ENCODE measurements at regions of chr3 and their contacts with region 1.

Region 1: GRCh38 chr3:46629551-46630517 is 17.5 kb downstream of the FAM240A start:
- DNase-seq: no peak
- H3K4me3 ChIP-seq: peak overlapping the region in 3 of 4 donors; percentile 20 to 55 (median 33)
- H3K27ac ChIP-seq: peak overlapping the region; percentile 41 to 81 (median 76)
- H3K4me1 ChIP-seq: peaks cover 4 to 25% (median 11%) of the 10 kb centered on the region in 3 donors
- H3K27me3 ChIP-seq: no peaks in the 10 kb centered on the region
- CTCF ChIP-seq: peak; percentile 84 to 96 (median 93)
- POLR2A ChIP-seq: no peak

Region 2: DNA sequence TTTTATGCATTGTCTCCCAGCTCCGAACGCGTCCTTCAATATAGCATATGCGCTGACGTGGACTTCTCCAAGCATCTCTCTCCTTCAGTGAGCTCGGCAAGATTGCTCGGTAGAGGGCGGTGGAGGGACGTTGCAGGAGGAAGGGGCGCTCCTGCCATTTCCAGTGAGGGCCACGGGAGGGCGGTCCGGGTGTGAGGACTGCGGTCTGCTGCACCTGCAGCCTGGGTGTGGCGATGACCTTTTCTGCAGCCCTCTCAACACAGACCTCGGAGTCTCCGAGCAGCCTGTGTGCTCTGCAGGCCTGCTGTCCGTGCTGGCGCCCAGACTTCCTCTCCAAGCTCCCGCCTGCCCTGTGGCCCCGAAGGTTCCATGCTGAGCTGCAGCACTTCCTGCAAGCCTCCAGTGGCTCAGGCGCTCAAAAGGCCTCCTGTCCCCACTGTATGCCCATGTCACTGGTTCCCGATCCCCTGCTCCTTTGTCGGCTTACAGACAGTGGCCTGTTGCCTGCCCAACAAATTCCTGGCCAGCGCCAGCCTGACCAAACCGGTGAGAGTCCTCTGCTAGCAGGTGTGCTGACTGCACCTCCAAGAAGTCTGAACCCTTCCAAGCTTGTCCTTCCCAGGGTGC is 141.0 kb before region 1 on chr3:
- intact Hi-C with region 1: loop called (anchors 10 kb)
- DNase-seq: peak; percentile 63
- H3K4me3 ChIP-seq: peak overlapping the region in 2 of 4 donors; percentile 11 to 17
- H3K27ac ChIP-seq: no peak overlapping the region
- H3K4me1 ChIP-seq: peaks cover 0 to 8% (median 4%) of the 10 kb centered on the region in 3 donors
- H3K27me3 ChIP-seq: peaks cover 0 to 10% (median 0%) of the 10 kb centered on the region in 4 donors
- CTCF ChIP-seq: peak; percentile 90 to 99 (median 97)
- POLR2A ChIP-seq: peak in 1 of 4 donors; percentile 14

Region 3: GRCh38 chr3:46835054-46835453 is 205.2 kb after region 1 on chr3:
- intact Hi-C with region 1: no loop called
- DNase-seq: no peak
- H3K4me3 ChIP-seq: no peak overlapping the region
- H3K27ac ChIP-seq: no peak overlapping the region
- H3K4me1 ChIP-seq: no peaks in the 10 kb centered on the region
- H3K27me3 ChIP-seq: no peaks in the 10 kb centered on the region
- CTCF ChIP-seq: no peak
- POLR2A ChIP-seq: no peak

Measured in esophagus squamous epithelium (tissue), 5 donors.